RWPE1 (cell line): ENCODE measurements at regions of chr14 and their contacts with region 1.

Region 1: DNA sequence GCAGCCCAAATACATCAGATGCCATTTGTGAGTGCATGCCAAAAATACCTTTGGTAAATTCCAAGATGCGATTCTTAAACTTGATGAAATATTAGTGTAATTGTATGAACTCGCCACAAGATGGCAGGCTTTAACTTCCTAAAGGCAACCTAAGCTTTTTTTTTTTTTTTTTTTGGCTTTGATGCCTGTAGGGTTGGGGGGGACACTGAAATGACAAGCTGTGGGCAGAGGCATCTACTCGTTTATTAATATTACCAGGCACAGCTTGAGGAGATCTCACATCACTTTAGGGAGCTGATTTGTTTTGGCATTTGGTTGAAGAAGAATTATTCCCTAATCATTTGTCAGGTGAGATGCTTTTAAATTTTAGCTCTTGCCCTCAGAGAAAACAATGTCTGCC is 126.7 kb upstream of the CCDC196 start:
- DNase-seq: peak; percentile 46
- H3K27ac ChIP-seq: no peak overlapping the region
- CTCF ChIP-seq: peak; percentile 61

Region 2: GRCh38 chr14:66322564-66322963 is 36.9 kb before region 1 on chr14:
- CTCF ChIA-PET with region 1: no interaction called
- POLR2A ChIA-PET with region 1: no interaction called
- DNase-seq: no peak
- H3K27ac ChIP-seq: no peak overlapping the region
- CTCF ChIP-seq: no peak

Region 3: DNA sequence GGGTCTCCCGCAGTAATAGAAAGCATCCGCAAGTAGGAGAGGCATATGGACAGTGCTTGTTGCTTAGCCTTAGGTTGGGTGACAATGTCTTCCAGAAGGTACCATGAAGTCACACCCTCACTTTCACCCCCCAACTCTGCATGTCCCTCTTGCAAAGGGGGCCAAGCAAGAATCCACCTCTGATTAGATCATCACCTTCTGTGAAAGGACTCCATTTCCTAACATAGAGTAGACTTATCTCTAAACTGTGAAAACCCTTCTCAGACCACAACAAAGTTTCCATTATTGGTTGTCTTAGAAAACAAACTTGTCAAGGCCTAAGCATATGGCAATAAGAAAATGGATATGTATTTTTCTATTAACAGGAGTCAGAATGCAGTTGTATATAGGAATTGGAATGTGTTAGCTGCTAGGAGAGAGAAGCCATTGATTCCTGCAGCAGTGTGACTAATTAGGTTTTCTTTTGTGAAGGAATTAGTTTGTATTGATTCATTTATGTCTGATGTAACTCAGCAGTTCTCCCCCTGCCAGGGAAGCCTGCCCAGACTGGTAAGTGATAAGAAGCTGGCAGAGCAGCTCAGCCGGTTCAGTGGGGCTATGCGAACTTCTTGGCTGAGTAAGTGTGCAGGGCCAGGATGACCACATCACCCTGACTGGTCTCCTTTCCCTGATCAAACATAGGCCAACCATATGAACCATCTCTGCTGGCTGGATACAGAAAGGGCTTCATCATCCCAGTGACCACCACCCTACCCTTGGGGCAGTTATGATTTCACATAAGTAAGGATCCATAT is 19.4 kb after region 1 on chr14:
- CTCF ChIA-PET with region 1: interaction called, 12 read pairs
- POLR2A ChIA-PET with region 1: no interaction called
- DNase-seq: peak; percentile 89
- H3K27ac ChIP-seq: no peak overlapping the region
- CTCF ChIP-seq: no peak

Region 4: GRCh38 chr14:66403183-66403582 is 43.7 kb after region 1 on chr14:
- CTCF ChIA-PET with region 1: interaction called, 75 read pairs
- POLR2A ChIA-PET with region 1: no interaction called
- DNase-seq: peak; percentile 40
- H3K27ac ChIP-seq: no peak overlapping the region
- CTCF ChIP-seq: peak; percentile 55